ENCODE measurements at regions of chr15 and their contacts with region 1.

Region 1: DNA sequence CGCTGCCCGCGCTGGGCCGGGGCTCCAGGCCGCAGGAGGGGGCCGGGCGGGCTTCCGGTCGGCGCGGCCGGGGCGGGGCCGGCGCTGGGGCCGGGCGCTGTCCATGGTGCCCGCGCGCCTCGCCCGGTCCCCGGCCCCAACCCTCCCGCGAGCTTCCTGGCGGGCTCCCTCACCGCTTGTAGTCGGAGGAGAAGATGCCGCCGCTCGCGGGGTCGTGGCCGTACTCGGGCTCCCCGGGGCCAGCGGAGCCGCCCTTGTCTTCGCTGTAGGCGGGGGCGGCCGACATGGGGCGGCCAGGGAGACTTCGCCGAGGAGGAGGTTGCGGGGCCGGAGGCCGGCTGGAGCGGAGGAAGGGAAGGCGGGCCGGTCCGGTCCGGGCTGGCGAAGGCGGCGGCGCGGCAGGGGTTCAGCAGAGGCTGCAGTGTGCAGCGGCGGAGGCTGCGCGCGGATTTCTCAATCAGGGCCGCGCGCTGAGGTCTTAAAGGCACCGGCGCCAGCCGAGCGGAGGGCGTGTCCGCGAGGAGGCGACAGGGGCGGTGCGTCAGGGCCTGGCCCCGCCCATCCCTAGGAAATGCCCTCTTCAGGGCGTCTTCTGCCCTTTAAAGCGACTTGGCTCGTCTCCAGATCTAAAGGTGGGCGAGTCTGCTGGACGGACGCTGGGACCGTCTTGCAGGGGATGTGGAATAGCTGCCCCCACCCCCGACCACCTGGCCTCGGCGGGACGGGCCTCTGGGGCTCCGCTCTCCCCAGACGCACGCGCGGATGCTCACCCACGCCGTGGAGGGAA is at the start of gene AP3B2:
- DNase-seq: peak; percentile 69
- H3K4me3 ChIP-seq: peak within 1 kb of the TSS; percentile 88 to 96 (median 89)
- H3K27ac ChIP-seq: no peak within 1 kb of the TSS
- H3K4me1 ChIP-seq: peaks cover 7% of the 10 kb centered on the region
- H3K27me3 ChIP-seq: no peaks in the 10 kb centered on the region
- CTCF ChIP-seq: no peak
- total RNA-seq, gene AP3B2: 5.5 to 12.3 TPM

Region 2: DNA sequence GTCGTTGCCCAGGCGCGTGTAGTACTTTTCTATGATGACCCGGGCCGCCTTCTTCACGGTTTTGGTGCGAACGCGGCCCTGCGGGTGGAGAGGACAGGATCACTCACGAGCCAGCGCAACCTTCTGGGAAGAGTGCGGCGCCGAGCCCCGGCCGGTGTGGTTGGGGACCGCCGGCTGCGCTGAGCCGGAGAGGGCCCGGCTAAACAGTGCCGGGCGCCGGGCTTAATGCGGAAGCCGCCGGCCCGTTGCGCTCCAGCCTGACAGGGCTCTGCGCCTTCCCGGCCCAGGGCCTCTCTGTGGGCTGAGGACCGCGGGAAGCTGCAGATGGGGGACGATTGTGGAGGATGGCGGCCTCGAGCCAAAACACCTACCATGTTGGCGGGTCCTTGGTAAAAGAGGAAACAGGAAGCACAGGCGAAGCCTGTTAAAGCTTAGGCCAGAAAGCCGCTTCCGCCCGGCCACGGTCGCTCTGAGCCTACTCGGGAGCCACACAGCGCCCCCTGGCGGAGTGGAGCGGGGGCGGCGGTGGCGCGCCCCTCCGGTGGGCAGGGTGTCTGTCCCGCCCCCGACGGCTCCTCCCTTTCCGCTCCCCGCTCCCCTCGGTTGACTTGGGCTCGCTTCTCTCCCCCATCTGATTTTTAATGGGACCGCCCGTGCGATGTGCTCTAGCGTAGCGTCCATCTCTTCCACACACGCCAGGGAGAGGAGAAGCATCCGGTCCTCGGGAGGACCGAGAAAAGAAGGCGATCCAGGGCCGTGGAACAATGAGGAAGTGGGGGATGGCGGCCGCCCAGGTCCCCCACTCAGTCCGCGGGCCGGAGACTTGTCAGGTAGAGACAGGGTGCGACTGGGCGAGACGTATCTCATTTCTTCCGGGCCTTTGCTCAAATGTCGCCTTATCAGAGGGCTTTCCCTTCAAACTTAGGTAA is 169.3 kb before region 1 on chr15 and contains the start of gene RPS17:
- CTCF ChIA-PET with region 1: no interaction called
- dilution Hi-C with region 1: no loop called
- in situ Hi-C with region 1: no loop called
- intact Hi-C with region 1: loop called (anchors 1 kb)
- DNase-seq: peak; percentile 96
- H3K4me3 ChIP-seq: peak within 1 kb of the TSS; percentile 83 to 92 (median 92)
- H3K27ac ChIP-seq: peak within 1 kb of the TSS; percentile 73
- H3K4me1 ChIP-seq: peaks cover 21% of the 10 kb centered on the region
- H3K27me3 ChIP-seq: no peaks in the 10 kb centered on the region
- CTCF ChIP-seq: peak; percentile 78 to 98
- total RNA-seq, gene RPS17: 1,069 to 1,616 TPM

Region 3: GRCh38 chr15:82647045-82647834 is 62.4 kb before region 1 on chr15 and contains the start of gene CPEB1:
- CTCF ChIA-PET with region 1: no interaction called
- dilution Hi-C with region 1: no loop called
- in situ Hi-C with region 1: no loop called
- intact Hi-C with region 1: loop called (anchors 10 kb)
- DNase-seq: peak; percentile 6
- H3K4me3 ChIP-seq: peak within 1 kb of the TSS; percentile 40 to 43 (median 41)
- H3K27ac ChIP-seq: no peak within 1 kb of the TSS
- H3K4me1 ChIP-seq: peaks cover 12% of the 10 kb centered on the region
- H3K27me3 ChIP-seq: peaks cover 29% of the 10 kb centered on the region
- CTCF ChIP-seq: peak in 1 of 2 donors; percentile 20
- total RNA-seq, gene CPEB1: 0.38 to 8.7 TPM

Region 4: DNA sequence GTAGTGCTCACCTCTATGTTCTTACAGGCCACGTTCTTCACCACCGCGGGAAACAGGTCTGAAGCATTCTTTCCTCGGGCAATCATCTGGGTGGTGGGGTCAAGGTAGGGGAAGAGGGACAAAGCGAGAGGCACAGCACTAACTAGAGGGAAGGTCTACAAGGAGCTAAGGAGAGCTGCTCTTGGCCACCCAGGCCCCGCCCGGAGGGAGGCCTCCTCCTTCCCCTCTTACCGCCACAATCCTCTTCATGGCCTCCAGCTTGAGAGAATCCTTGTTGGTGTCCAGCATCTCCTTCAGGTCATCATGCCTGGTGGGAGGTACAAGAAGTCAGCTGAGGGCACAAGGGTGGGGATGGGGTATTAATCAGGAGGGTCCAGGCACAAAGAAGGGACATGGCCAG is 20.5 kb before region 1 on chr15:
- CTCF ChIA-PET with region 1: no interaction called
- dilution Hi-C with region 1: no loop called
- in situ Hi-C with region 1: no loop called
- intact Hi-C with region 1: no loop called
- DNase-seq: no peak
- H3K4me3 ChIP-seq: no peak overlapping the region
- H3K27ac ChIP-seq: no peak overlapping the region
- H3K4me1 ChIP-seq: no peaks in the 10 kb centered on the region
- H3K27me3 ChIP-seq: no peaks in the 10 kb centered on the region
- CTCF ChIP-seq: no peak

Region 5: DNA sequence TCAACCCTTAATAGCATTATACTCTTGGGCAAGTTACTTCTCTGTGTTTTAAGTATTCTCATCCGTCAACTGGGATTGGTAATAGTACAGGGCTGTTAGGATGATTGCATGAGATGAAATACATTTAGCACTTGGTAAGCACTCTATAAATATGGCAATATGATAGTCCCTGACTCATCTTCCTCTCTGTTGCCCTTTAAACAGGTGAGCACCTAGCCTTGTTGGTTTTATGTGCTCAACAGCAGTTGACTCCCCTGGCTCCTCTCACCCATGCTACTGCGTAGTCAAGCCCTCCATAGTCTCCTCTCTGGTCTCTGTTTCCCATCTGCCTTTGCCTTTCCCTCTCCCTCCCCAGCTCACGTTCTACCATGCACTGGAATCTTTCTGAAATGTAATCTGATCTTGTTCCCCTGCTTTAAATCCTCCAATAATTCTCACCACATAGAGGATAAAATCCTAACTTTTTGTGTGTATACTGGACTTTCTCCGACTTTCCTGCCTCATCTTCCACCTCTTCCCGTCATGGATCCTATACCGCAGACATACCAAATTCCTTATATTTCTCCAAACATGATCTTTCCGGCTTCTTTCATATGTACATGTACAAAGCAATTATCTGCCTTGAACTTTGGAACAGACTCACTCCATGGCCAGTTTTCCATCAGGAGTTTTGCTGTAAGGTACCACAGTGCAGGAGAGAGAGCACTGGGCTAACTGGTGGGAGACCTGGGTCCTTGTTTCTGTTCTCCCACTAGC is 53.9 kb after region 1 on chr15:
- CTCF ChIA-PET with region 1: no interaction called
- dilution Hi-C with region 1: loop called (anchors 5 kb)
- in situ Hi-C with region 1: no loop called
- intact Hi-C with region 1: no loop called
- DNase-seq: no peak
- H3K4me3 ChIP-seq: no peak overlapping the region
- H3K27ac ChIP-seq: no peak overlapping the region
- H3K4me1 ChIP-seq: no peaks in the 10 kb centered on the region
- H3K27me3 ChIP-seq: no peaks in the 10 kb centered on the region
- CTCF ChIP-seq: no peak

Measured in mammary epithelial cell (primary cell).